ENCODE measurements at regions of chr22 and their contacts with region 1.

Region 1: DNA sequence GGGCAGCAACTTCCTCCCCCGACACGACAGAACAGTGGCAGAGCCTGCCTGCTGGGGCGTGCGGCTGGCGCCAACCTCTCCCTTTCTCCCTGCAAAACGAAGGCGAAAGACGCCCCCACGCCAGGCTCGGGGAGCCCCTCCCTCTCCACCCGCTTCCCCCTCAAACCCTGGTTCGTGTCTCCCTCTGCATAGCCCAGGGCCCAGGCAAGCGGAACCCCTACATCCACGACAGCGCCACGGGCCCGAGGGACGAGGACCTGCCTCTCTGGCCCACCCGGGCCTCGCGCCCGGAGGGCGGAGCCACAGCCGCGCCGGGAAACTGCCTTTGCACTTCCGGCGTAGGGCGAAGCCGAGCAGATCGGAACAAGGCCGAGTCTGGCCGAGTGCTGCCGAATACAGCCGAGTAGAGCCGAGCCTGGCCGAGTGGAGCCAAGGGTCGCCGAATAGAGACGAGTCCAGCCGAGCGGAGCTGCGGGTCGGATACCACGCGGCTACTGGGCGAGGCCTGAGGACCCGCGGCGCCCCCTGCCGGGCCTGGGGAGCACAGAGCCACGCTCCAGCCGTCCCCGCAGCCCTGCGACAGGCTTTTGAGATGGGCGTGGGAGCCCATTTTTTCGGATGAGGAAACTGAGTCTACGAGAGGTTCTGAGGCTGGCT is 11.2 kb upstream of the C1QTNF6 start:
- DNase-seq: peak; percentile 100
- ATAC-seq: peak; percentile 96

Region 2: GRCh38 chr22:36787204-36787988 is 411.8 kb before region 1 on chr22:
- intact Hi-C with region 1: loop called (anchors 5 kb)
- DNase-seq: no peak
- ATAC-seq: no peak

Region 3: DNA sequence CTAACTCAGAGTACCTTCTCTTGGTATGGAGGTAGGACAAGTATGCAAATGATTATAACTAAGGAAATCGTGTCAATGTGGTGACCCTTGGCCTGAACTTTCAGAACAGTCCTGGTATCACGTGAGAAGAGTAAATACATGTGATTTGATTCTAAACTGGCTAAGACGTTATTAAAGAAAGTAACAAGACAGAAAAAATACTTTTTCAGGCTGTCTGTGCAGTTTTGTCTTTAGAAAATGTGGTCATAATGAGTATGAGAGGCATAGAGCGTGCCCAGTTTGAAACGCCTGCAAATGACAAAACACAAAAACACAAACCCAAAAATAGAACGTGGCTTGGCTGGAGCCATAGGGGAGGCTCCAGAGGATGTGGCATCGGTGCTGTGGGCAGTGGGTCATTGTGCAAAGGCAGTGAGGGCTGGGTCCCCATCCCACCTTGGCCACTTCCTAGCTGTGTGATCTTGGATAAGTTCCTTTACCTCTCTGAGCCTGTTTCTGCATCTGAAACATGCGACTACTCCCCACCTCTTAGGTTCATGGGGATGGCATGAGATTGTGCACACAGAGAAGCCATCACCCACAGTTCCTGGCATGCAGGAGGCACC is 31.1 kb before region 1 on chr22:
- intact Hi-C with region 1: loop called (anchors 2 kb)
- DNase-seq: peak; percentile 28
- ATAC-seq: no peak

Region 4: GRCh38 chr22:37229805-37230672 is 30.8 kb after region 1 on chr22:
- intact Hi-C with region 1: no loop called
- DNase-seq: no peak
- ATAC-seq: peak; percentile 45

Measured in sciatic nerve (tissue), 2 donors.